Uterus (tissue), 4 donors: ENCODE measurements at regions of chr6 and their contacts with region 1.

Region 1: GRCh38 chr6:110039364-110039980 is 61.4 kb downstream of the GPR6 start:
- DNase-seq: peak; percentile 80 to 82
- H3K4me3 ChIP-seq: peak overlapping the region in 1 of 2 donors; percentile 26
- H3K27ac ChIP-seq: peak overlapping the region in 1 of 2 donors; percentile 66
- H3K4me1 ChIP-seq: no peaks in the 10 kb centered on the region
- H3K27me3 ChIP-seq: no peaks in the 10 kb centered on the region
- CTCF ChIP-seq: peak; percentile 77 to 91 (median 86)
- POLR2A ChIP-seq: no peak

Region 2: DNA sequence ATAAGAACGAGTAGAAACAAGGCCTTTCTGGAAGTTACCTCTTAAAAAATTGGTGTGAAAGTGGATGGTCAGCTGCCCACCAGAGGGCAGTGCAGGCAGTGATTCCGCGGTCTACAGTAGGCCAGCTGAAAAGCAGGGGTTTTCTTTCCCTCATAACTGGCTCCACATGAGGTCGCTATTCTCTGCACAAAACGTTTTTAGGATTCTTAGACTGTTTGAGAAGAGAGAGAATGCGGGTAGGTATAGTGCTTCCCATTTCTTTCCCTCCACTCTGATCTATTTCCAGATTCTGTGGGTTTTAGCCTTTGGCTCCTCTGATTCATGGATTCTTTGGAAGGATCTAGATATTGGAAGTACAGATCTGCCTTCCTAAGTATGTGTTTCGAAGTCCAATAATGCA is 334.2 kb before region 1 on chr6:
- intact Hi-C with region 1: loop called (anchors 10 kb)
- DNase-seq: peak; percentile 76 to 80
- H3K4me3 ChIP-seq: no peak overlapping the region
- H3K27ac ChIP-seq: no peak overlapping the region
- H3K4me1 ChIP-seq: no peaks in the 10 kb centered on the region
- H3K27me3 ChIP-seq: no peaks in the 10 kb centered on the region
- CTCF ChIP-seq: peak; percentile 94 to 98 (median 95)
- POLR2A ChIP-seq: no peak